MCF 10A (cell line): ENCODE measurements at regions of chr5 and their contacts with region 1.

Region 1: GRCh38 chr5:149367249-149367971 is 9.6 kb downstream of the PCYOX1L start:
- DNase-seq: peak; percentile 87
- H3K4me3 Mint-ChIP-seq: no peak overlapping the region
- H3K27ac Mint-ChIP-seq: no peak overlapping the region
- H3K4me1 Mint-ChIP-seq: peaks cover 8% of the 10 kb centered on the region
- H3K27me3 Mint-ChIP-seq: no peaks in the 10 kb centered on the region
- CTCF ChIP-seq: peak; percentile 85

Region 2: DNA sequence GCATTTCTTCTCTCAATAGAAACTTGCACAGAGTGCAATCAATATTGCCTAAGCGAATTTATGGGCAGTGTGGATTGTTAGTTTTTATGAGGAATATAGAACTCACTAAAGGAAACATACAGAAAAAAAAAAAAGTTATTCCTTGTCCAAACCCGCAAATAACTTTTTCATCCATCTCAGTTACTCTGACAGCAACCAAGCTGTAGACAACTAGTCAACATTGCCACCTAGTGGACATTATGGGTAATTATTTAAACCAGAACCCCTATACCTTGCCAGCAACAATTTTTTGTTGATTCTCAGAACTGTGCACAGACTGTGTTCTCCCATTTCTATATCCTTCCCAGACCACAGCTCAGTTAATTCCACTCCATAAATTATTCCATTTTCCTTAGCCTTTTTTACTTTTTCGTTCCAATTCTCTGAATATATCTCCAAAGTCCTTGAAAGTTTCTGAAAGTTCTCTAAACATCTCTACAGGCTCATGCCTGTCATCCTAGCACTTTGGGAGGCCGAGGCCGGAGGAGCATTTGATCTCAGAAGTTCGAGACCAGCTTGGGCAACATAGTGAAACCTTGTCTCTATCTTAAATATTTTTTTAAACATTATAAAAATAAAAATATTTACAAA is 98.4 kb before region 1 on chr5:
- CTCF ChIA-PET with region 1: interaction called, 21 read pairs
- POLR2A ChIA-PET with region 1: interaction called, 3 read pairs
- intact Hi-C with region 1: loop called (anchors 1 kb)
- DNase-seq: peak; percentile 84
- H3K4me3 Mint-ChIP-seq: no peak overlapping the region
- H3K27ac Mint-ChIP-seq: no peak overlapping the region
- H3K4me1 Mint-ChIP-seq: peaks cover 14% of the 10 kb centered on the region
- H3K27me3 Mint-ChIP-seq: no peaks in the 10 kb centered on the region
- CTCF ChIP-seq: peak; percentile 91

Region 3: DNA sequence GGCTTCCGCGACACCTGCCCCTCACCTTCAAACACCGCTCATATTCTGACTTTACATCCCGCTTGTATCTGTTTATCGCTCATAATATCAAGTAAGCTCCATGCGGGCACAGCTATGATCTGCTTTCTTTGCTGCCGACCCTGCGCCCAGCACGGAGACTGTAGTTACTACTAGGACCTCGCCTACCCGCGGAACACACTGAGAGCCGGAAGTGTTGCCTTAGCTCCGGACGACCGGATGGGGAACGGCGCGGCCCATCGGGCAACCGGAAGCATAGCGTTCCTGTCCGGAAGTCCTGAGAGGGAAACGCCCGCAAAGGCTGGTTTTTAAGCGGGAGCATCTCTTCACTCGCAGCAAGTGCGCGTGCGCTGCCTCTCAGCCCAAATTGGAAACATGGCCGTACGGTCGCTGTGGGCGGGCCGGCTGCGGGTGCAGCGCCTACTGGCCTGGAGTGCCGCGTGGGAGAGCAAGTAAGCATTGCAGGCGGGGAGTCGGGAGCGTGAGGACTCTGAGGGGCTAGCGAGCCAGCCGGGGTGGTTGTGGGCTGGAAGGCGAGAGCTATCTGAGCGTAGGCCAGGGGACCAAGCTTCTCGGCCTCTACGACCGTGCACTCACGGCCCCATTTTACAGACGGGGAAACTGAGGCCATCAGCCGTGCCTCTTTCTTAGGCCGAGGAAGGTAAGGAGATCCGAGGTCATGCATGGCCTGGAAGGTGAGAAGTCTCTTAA is 22.1 kb before region 1 on chr5 and contains the start of gene GRPEL2:
- CTCF ChIA-PET with region 1: interaction called, 356 read pairs
- POLR2A ChIA-PET with region 1: interaction called, 14 read pairs
- intact Hi-C with region 1: no loop called
- DNase-seq: peak; percentile 99
- H3K4me3 Mint-ChIP-seq: peak within 1 kb of the TSS; percentile 96
- H3K27ac Mint-ChIP-seq: peak within 1 kb of the TSS; percentile 94
- H3K4me1 Mint-ChIP-seq: peaks cover 22% of the 10 kb centered on the region
- H3K27me3 Mint-ChIP-seq: no peaks in the 10 kb centered on the region
- CTCF ChIP-seq: no peak
- total RNA-seq, gene GRPEL2: 69.5 and 86.6 TPM in 2 replicates

Region 4: GRCh38 chr5:149392718-149393117 is 25.3 kb after region 1 on chr5:
- CTCF ChIA-PET with region 1: interaction called, 46 read pairs
- POLR2A ChIA-PET with region 1: interaction called, 3 read pairs
- intact Hi-C with region 1: no loop called
- DNase-seq: peak; percentile 66
- H3K4me3 Mint-ChIP-seq: no peak overlapping the region
- H3K27ac Mint-ChIP-seq: no peak overlapping the region
- H3K4me1 Mint-ChIP-seq: no peaks in the 10 kb centered on the region
- H3K27me3 Mint-ChIP-seq: no peaks in the 10 kb centered on the region
- CTCF ChIP-seq: no peak

Region 5: GRCh38 chr5:149416987-149417710 is 49.7 kb after region 1 on chr5:
- CTCF ChIA-PET with region 1: interaction called, 18 read pairs
- POLR2A ChIA-PET with region 1: no interaction called
- intact Hi-C with region 1: no loop called
- DNase-seq: no peak
- H3K4me3 Mint-ChIP-seq: no peak overlapping the region
- H3K27ac Mint-ChIP-seq: no peak overlapping the region
- H3K4me1 Mint-ChIP-seq: no peaks in the 10 kb centered on the region
- H3K27me3 Mint-ChIP-seq: peaks cover 18% of the 10 kb centered on the region
- CTCF ChIP-seq: no peak

Region 6: DNA sequence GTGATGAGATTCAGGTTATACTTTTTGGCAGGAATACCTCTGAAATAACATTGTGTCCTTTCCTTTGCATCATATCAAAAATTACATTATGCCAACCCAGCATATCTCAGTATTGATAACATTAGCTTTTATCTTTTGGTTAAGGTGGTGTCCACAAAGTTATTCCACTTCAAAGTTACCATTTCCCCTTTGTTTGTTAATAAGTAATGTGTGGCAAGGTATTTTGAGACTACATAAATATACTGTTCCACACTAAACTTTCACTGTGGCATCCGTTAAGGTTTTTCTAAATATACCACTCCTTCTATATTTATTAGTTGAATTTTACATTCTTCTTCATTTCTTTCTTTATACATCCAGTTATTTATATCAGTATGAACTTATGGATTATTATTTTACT is 199.8 kb after region 1 on chr5:
- CTCF ChIA-PET with region 1: interaction called, 36 read pairs
- POLR2A ChIA-PET with region 1: interaction called, 6 read pairs
- intact Hi-C with region 1: loop called (anchors 1 kb)
- DNase-seq: no peak
- H3K4me3 Mint-ChIP-seq: no peak overlapping the region
- H3K27ac Mint-ChIP-seq: no peak overlapping the region
- H3K4me1 Mint-ChIP-seq: peaks cover 20% of the 10 kb centered on the region
- H3K27me3 Mint-ChIP-seq: no peaks in the 10 kb centered on the region
- CTCF ChIP-seq: no peak